Left ventricle myocardium inferior (tissue), 1 donor: ENCODE measurements at regions of chr2 and their contacts with region 1.

Region 1: GRCh38 chr2:152189622-152190495 is 14.3 kb upstream of the STAM2 start:
- DNase-seq: no peak
- H3K4me3 ChIP-seq: no peak overlapping the region
- H3K27ac ChIP-seq: no peak overlapping the region
- H3K4me1 ChIP-seq: no peaks in the 10 kb centered on the region
- H3K27me3 ChIP-seq: peaks cover 9% of the 10 kb centered on the region
- CTCF ChIP-seq: peak; percentile 87

Region 2: GRCh38 chr2:152627351-152627957 is 437.6 kb after region 1 on chr2:
- intact Hi-C with region 1: loop called (anchors 5 kb)
- DNase-seq: no peak
- H3K4me3 ChIP-seq: no peak overlapping the region
- H3K27ac ChIP-seq: no peak overlapping the region
- H3K4me1 ChIP-seq: no peaks in the 10 kb centered on the region
- H3K27me3 ChIP-seq: no peaks in the 10 kb centered on the region
- CTCF ChIP-seq: peak; percentile 73